Mammary epithelial cell (primary cell): ENCODE measurements at regions of chr6 and their contacts with region 1.

Region 1: DNA sequence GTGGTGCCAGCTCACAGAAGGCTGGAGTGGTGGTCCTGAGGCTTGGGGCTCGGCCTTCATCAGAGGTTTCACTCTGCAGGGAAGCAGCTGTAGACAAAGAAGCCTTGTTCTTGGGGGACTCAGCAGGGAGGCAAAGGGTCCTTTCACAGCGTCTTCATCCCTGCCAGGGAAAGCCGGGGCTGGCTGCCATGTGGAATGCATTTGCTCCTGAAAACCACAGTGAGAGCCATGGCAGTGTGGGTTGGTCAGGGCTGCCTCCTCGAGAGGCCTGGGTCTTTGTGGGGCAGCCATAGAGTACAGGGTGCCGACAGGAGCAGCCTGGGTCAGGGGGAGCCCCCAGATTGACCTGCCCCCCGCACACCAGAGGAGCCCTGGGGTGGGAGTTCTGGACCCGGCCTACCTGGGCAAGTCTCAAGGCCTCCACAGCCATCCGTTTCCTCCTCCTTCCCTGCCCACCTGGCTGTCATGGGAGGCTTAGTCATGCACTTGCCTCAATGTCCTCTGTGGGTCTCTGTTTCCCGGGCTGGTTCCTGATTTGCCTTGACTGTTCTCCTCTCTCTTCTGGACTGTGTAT is 144.0 kb downstream of the CDC5L start:
- DNase-seq: no peak
- H3K4me3 ChIP-seq: no peak overlapping the region
- H3K27ac ChIP-seq: no peak overlapping the region
- H3K4me1 ChIP-seq: no peaks in the 10 kb centered on the region
- H3K27me3 ChIP-seq: no peaks in the 10 kb centered on the region
- CTCF ChIP-seq: no peak

Region 2: GRCh38 chr6:44475779-44476434 is 55.6 kb before region 1 on chr6:
- CTCF ChIA-PET with region 1: no interaction called
- dilution Hi-C with region 1: no loop called
- in situ Hi-C with region 1: no loop called
- intact Hi-C with region 1: no loop called
- DNase-seq: peak; percentile 70
- H3K4me3 ChIP-seq: no peak overlapping the region
- H3K27ac ChIP-seq: no peak overlapping the region
- H3K4me1 ChIP-seq: peaks cover 15% of the 10 kb centered on the region
- H3K27me3 ChIP-seq: no peaks in the 10 kb centered on the region
- CTCF ChIP-seq: peak; percentile 89 to 97

Region 3: GRCh38 chr6:44606504-44606903 is 75.0 kb after region 1 on chr6:
- CTCF ChIA-PET with region 1: no interaction called
- dilution Hi-C with region 1: loop called (anchors 5 kb)
- in situ Hi-C with region 1: no loop called
- intact Hi-C with region 1: no loop called
- DNase-seq: no peak
- H3K4me3 ChIP-seq: no peak overlapping the region
- H3K27ac ChIP-seq: no peak overlapping the region
- H3K4me1 ChIP-seq: no peaks in the 10 kb centered on the region
- H3K27me3 ChIP-seq: no peaks in the 10 kb centered on the region
- CTCF ChIP-seq: no peak